Activated CD4-positive, alpha-beta memory T cell treated with anti-CD3 and anti-CD28 coated beads for 36 hours (primary cell): ENCODE measurements at regions of chr2 and their contacts with region 1.

Region 1: GRCh38 chr2:240586198-240586918 is at the start of gene CAPN10:
- DNase-seq: peak; percentile 98
- H3K4me3 Mint-ChIP-seq: peak within 1 kb of the TSS; percentile 98
- H3K27ac Mint-ChIP-seq: peak within 1 kb of the TSS; percentile 86
- H3K4me1 Mint-ChIP-seq: peaks cover 39% of the 10 kb centered on the region
- H3K27me3 Mint-ChIP-seq: no peaks in the 10 kb centered on the region
- total RNA-seq, gene CAPN10: 32.6 to 33.9 TPM

Region 2: GRCh38 chr2:240624950-240625621 is 38.7 kb after region 1 on chr2 and contains the start of gene GPR35:
- CTCF ChIA-PET with region 1: interaction called, 6 read pairs
- POLR2A ChIA-PET with region 1: interaction called, 10 read pairs
- intact Hi-C with region 1: loop called (anchors 5 kb)
- DNase-seq: peak; percentile 87
- H3K4me3 Mint-ChIP-seq: peak within 1 kb of the TSS; percentile 58
- H3K27ac Mint-ChIP-seq: peak within 1 kb of the TSS; percentile 69
- H3K4me1 Mint-ChIP-seq: peaks cover 48% of the 10 kb centered on the region
- H3K27me3 Mint-ChIP-seq: no peaks in the 10 kb centered on the region
- total RNA-seq, gene GPR35: 3.4 to 4.7 TPM